GM18951 (cell line): ENCODE measurements at regions of chr1 and their contacts with region 1.

Region 1: DNA sequence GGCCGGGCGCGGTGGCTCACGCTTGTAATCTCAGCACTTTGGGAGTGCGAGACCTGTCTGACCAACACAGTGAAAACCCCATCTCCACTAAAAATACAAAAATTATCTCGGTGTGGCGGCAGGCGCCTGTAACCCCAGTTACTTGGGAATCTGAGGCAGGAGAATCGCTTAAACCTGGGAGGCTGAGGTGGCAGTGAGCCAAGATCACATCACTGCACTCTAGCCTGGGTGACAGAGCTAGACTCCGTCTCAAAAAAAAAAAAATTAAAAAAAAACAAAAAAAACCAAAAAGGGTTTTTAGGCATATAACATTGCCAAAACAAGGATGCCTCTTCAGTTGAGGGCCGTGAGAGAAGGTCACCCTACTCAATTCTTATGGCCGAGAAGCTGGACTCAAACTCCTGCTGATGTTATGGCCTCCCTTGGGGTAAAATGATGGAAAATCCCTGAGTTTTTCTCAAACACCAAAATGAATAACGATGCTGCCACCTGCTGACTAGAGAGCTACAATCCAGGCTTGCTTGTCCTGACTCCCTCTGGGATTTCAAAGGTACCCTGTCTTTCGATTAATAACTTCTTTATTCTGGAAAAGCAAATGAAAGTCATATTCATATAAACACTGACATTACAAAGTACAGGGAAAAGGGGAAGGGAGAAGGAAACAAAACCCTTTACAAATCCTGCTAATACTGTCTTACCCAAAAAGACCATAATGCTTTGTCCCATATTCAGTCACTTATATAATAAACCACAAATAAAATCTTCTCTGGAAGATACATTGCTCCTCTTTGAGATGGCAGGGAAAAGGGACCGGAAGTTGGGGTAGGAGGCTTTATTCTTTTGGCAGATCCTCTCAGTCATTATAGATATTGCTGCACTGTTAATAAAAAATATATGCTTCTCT is 10.7 kb downstream of the RAB42 start:
- POLR2A ChIP-seq: no peak

Region 2: DNA sequence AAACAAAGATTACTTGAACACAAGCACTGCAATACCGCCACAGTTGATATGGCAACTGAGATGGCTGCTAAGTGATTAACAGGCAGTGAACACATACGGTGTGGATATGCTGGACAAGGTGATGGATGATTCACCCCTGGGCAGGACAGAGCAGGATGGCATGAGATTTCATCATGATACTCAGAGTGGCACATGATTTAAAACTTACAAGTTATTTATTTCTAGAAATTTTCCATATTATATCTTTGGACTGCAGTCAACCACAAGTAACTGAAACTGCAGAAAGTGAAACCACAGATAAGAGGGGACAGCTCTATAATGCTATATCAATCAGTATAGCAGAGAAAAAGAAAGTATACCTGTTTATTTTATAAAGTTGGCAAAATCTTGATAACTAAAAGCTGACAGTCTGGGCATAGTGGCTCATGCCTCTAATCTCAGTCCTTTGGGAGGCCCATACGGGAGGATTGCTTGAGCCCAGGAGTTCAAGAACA is 185.3 kb before region 1 on chr1:
- in situ Hi-C with region 1: loop called (anchors 25 kb)
- POLR2A ChIP-seq: no peak

Region 3: DNA sequence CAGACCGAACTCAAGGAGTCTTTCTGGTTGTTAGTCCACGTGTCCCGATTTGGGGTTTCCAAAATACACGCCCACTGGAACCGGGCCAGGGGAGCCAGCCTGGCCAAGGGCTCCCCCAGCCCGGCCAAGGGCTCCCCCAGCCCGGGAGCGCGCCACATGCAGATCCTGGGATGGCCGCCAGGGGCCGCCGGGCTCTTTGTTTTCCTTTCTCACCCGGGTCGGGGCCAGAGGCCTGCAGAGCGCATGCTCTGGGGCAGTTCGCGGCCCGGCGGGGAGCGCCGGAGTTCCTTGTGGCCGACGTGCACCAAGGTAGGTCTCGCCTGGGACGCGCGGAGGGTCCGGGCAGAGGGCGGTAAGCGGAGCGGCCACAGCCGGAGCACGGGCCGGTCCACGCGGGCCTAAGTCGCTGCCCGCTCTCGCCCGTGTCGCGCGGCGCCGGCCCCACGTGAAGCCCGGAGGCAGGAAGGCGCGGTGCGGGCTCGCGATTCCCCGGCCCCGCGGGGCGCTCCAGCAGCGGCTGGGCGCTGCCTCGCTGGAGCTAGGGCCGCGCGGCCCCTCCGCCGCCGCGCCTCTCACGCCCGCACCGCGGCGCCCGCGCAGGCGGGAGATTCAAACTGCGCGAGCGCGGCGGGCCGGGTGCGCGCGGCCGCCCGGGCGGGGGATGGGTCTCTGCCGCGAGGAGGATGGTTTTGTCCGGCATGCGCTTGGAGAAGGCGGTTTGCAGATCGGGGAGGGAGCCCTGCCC is 84.6 kb before region 1 on chr1:
- in situ Hi-C with region 1: loop called (anchors 10 kb)
- POLR2A ChIP-seq: peak; percentile 86